Vagina (tissue), 2 donors: ENCODE measurements at regions of chr14 and their contacts with region 1.

Region 1: GRCh38 chr14:74472601-74473000 is 20.5 kb downstream of the NPC2 start:
- DNase-seq: no peak
- H3K4me3 ChIP-seq: no peak overlapping the region
- H3K27ac ChIP-seq: no peak overlapping the region
- H3K4me1 ChIP-seq: no peaks in the 10 kb centered on the region
- H3K27me3 ChIP-seq: no peaks in the 10 kb centered on the region
- CTCF ChIP-seq: no peak
- POLR2A ChIP-seq: no peak

Region 2: DNA sequence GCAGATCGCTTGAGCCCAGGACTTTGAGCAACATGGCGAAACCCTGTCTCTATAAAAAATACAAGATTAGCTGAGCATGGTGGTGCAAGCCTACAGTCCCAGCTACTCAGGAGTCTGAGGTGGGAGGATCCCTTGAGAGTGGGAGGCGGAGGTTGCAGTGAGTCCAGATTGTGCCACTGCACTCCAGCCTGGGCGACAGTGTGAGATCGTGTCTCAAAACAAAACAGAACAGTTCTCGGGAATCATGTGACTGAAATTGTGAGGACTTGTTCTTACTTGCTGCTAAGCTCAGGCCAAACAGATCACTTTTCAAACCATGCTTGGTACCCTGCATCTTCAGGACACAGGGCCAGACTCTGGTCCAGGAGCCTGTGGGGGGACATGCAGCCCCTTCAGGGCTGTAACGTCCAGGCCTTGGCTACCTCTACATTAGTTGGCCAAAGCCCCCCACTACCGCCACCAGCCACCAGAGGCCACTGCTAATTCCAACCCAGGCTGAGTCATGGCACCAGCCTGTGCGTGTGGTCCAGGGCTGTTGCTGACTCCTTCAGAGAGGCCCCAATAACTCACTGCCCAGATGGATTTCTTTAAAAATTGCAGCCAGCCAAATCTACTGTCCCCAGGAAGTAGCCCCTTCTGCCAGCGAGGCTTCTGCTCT is 13.2 kb before region 1 on chr14:
- intact Hi-C with region 1: loop called (anchors 1 kb)
- DNase-seq: no peak
- H3K4me3 ChIP-seq: no peak overlapping the region
- H3K27ac ChIP-seq: no peak overlapping the region
- H3K4me1 ChIP-seq: peaks cover 11% of the 10 kb centered on the region
- H3K27me3 ChIP-seq: no peaks in the 10 kb centered on the region
- CTCF ChIP-seq: peak in 1 of 3 experiments; percentile 25
- POLR2A ChIP-seq: no peak

Region 3: DNA sequence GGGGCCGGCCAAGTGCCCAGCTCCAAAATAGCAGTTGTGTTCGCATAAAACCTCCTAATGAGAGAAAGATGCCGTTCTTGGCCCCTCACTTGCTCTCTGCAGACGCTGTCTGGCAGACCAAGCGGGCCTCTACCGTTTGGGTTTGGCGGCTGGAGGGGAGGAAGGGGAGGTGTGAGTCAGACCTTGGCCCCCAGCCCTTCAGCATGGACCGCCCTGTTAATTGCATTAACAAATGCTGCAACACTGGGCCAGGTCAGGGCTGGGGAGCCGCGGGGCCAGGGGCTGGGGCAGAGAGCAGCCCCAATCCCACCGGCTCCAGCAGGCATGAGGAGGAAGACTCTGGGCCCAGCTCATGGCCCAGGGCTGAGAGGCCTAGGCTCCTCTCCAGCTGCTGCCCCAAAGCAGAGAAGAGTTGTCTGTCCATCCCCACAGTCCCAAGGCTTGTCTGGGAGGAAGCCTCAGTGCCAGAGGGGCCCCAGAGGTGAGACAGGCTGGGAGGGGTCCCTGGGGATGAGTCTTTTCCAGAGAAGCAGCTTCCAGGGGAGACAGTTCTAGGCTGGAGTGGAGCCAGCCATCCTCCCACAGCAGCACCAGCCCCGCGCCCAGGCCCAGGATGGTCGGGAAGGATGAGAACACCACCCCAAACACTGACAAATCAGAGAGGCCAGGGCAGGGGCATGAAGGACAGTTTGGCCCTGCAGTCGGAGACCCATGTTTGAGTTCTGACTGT is 122.6 kb after region 1 on chr14:
- intact Hi-C with region 1: no loop called
- DNase-seq: no peak
- H3K4me3 ChIP-seq: no peak overlapping the region
- H3K27ac ChIP-seq: peak overlapping the region; percentile 86
- H3K4me1 ChIP-seq: peaks cover 92% of the 10 kb centered on the region
- H3K27me3 ChIP-seq: no peaks in the 10 kb centered on the region
- CTCF ChIP-seq: no peak
- POLR2A ChIP-seq: no peak

Region 4: DNA sequence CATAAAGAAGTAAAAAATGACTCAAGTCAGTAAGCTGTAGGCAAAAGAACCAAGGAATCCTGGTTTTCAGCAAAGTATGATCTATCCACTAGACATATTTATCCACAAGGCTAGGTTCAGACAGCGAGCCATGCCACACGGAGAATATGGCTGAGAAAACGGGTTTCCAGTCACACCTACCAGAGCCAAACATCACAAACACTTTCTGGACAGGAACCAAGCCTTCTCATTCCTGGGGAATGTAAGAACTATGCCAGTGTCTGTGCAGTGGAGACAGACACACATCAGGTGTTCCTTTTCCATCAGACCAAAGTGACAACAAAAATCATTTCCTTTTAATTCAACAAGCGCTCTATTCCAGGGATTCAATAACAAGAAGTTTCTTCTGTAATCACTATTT is 199.2 kb after region 1 on chr14:
- intact Hi-C with region 1: no loop called
- DNase-seq: no peak
- H3K4me3 ChIP-seq: no peak overlapping the region
- H3K27ac ChIP-seq: no peak overlapping the region
- H3K4me1 ChIP-seq: no peaks in the 10 kb centered on the region
- H3K27me3 ChIP-seq: no peaks in the 10 kb centered on the region
- CTCF ChIP-seq: no peak
- POLR2A ChIP-seq: no peak